Lower leg skin (tissue), 4 donors: ENCODE measurements at regions of chr20 and their contacts with region 1.

Region 1: GRCh38 chr20:19784511-19785172 is 26.6 kb downstream of the RIN2 start:
- DNase-seq: peak in 1 of 2 donors; percentile 60
- H3K4me3 ChIP-seq: no peak overlapping the region
- CTCF ChIP-seq: peak in 1 of 3 donors; percentile 85
- POLR2A ChIP-seq: no peak

Region 2: GRCh38 chr20:19692685-19693119 is 91.9 kb before region 1 on chr20:
- intact Hi-C with region 1: loop called (anchors 10 kb)
- DNase-seq: peak; percentile 49 to 94
- H3K4me3 ChIP-seq: no peak overlapping the region
- CTCF ChIP-seq: peak in 1 of 3 donors; percentile 59
- POLR2A ChIP-seq: no peak

Region 3: DNA sequence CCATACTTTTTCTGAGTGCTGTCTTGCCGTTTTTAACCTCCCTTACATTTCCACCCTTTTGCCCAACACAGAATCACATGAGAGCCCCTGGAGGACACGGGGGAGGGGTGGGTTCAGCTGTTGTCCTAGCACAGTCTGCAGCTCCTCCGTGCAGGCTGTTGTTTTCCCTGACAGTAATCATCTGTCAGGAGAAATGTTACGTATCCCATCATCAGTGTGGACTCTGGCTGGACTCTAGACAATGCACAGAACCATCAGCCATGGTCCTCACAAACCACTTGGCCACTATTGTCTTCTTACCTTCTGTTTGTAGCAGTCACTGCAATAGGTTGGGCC is 65.5 kb after region 1 on chr20:
- intact Hi-C with region 1: no loop called
- DNase-seq: no peak
- H3K4me3 ChIP-seq: no peak overlapping the region
- CTCF ChIP-seq: no peak
- POLR2A ChIP-seq: no peak

Region 4: DNA sequence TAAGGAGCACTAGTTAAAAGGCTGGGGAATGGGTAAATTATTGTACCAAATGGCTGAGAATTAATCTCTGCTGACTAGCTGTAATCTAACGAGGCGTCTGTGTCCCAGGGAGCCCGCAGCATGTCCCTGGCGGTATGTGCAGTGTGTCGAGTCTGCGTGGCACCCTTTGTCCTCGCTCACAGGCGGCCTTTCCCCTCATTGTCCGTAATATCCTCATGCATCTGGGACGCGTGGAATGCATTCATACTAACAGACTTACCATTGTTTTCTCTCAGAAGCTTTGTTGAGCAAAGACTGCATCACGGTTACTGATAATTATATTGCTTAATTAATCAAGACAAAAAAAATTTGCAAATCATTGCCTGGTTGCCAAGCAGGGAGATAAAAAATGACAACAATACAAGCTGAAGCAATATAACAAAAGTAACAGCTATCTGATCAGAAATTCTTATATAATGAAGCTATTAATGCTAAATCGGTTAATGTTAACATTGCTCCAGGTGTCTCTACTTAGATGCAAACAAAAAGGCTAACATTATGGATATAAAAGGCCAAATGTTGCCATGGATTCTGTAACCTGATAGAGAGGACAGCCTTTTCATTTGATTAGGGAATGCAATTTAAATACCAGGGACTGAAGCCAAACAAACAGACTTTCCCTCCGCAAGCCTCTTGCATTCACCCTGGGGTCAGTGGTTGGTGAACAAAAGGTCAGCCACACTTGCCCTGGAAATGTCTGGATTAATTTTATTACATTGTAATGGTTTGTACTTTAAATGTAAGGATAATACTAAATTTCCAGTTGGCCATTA is 708.1 kb after region 1 on chr20:
- intact Hi-C with region 1: no loop called
- DNase-seq: no peak
- H3K4me3 ChIP-seq: no peak overlapping the region
- CTCF ChIP-seq: no peak
- POLR2A ChIP-seq: no peak